Gastrocnemius medialis (tissue), 4 donors: ENCODE measurements at regions of chr15 and their contacts with region 1.

Region 1: DNA sequence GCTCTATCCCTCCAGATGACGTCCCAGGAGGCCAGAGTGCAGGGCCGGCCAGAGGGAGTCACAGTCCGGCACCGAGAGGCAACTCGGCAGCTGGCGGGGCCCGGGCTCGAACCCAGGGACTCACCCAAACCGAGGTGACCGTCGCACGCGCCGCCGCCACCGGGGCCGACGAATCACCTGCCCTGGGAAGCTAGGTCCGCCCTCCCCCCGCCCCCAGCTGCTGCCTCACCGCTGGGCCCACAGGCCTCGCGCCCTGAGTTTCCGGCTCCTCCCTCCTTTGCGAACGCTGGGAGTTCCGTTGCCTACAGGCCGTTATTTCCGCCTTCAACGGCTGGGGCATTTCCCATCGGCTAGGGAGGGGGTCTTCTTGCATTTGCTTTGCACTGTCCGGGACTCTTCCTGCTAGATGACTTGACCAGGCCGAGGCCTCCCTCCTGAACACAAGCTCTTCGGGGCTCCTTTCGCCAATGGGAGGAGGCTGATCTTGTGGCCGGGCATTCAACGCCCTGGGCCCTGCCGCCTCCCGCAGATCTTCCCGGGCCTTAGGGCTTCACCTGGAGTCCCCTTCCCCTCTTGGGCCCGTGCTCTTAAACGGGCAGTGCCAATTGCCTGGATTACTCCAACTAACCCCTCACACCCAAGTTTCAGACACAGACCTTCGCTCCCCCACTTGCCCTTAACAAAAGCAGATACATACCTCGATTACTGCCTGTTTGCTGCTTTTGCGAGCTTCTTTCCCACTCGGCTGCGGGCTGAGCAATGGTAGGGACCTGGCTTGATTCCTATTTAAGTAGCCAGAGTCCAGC is at the start of gene SNUPN:
- DNase-seq: peak; percentile 92 to 93
- ATAC-seq: peak; percentile 95
- H3K4me3 ChIP-seq: peak within 1 kb of the TSS; percentile 82 to 93 (median 84)
- H3K27ac ChIP-seq: peak within 1 kb of the TSS; percentile 95 to 97 (median 96)
- H3K4me1 ChIP-seq: peaks cover 4 to 6% of the 10 kb centered on the region in 2 donors
- H3K27me3 ChIP-seq: no peaks in the 10 kb centered on the region
- CTCF ChIP-seq: no peak
- POLR2A ChIP-seq: peak; percentile 38 to 53
- total RNA-seq, gene SNUPN: 14.2 to 18.3 (median 15.9) TPM

Region 2: GRCh38 chr15:75367913-75368688 is 257.6 kb before region 1 on chr15 and contains the start of gene MAN2C1:
- in situ Hi-C with region 1: loop called in 2 of 4 experiments (anchors 25 kb)
- intact Hi-C with region 1: loop called (anchors 1 kb)
- DNase-seq: peak; percentile 92 to 97
- ATAC-seq: peak; percentile 89 to 93
- H3K4me3 ChIP-seq: peak within 1 kb of the TSS; percentile 87 to 99 (median 96)
- H3K27ac ChIP-seq: peak within 1 kb of the TSS; percentile 96 to 100 (median 98)
- H3K4me1 ChIP-seq: peaks cover 18 to 19% of the 10 kb centered on the region in 2 donors
- H3K27me3 ChIP-seq: no peaks in the 10 kb centered on the region
- CTCF ChIP-seq: peak in 3 of 5 experiments; percentile 72 to 81 (median 80)
- POLR2A ChIP-seq: peak; percentile 86 to 89
- total RNA-seq, gene MAN2C1: 38.9 to 116 (median 62.8) TPM

Region 3: GRCh38 chr15:75397494-75397893 is 228.3 kb before region 1 on chr15:
- in situ Hi-C with region 1: loop called in 1 of 4 experiments (anchors 25 kb)
- intact Hi-C with region 1: no loop called
- DNase-seq: no peak
- ATAC-seq: no peak
- H3K4me3 ChIP-seq: no peak overlapping the region
- H3K27ac ChIP-seq: no peak overlapping the region
- H3K4me1 ChIP-seq: no peaks in the 10 kb centered on the region
- H3K27me3 ChIP-seq: no peaks in the 10 kb centered on the region
- CTCF ChIP-seq: no peak
- POLR2A ChIP-seq: no peak